Right lobe of liver (tissue), 6 donors: ENCODE measurements at regions of chr1 and their contacts with region 1.

Region 1: GRCh38 chr1:12124693-12125421 is 41.9 kb upstream of the TNFRSF1B start:
- DNase-seq: peak; percentile 78 to 84 (median 83)
- ATAC-seq: peak; percentile 82 to 92 (median 87)
- H3K4me3 ChIP-seq: no peak overlapping the region
- H3K27ac ChIP-seq: no peak overlapping the region
- H3K4me1 ChIP-seq: peaks cover 0 to 9% (median 3%) of the 10 kb centered on the region in 4 donors
- H3K27me3 ChIP-seq: no peaks in the 10 kb centered on the region
- CTCF ChIP-seq: peak; percentile 92 to 97 (median 95)
- POLR2A ChIP-seq: no peak

Region 2: GRCh38 chr1:12052008-12052573 is 72.8 kb before region 1 on chr1:
- intact Hi-C with region 1: no loop called
- DNase-seq: no peak
- ATAC-seq: peak; percentile 22 to 62 (median 36)
- H3K4me3 ChIP-seq: no peak overlapping the region
- H3K27ac ChIP-seq: no peak overlapping the region
- H3K4me1 ChIP-seq: no peaks in the 10 kb centered on the region
- H3K27me3 ChIP-seq: no peaks in the 10 kb centered on the region
- CTCF ChIP-seq: no peak
- POLR2A ChIP-seq: no peak

Region 3: GRCh38 chr1:12208764-12209494 is 84.1 kb after region 1 on chr1:
- intact Hi-C with region 1: loop called (anchors 2 to 5 kb)
- DNase-seq: peak; percentile 79 to 88 (median 84)
- ATAC-seq: peak; percentile 88 to 92 (median 90)
- H3K4me3 ChIP-seq: no peak overlapping the region
- H3K27ac ChIP-seq: no peak overlapping the region
- H3K4me1 ChIP-seq: no peaks in the 10 kb centered on the region
- H3K27me3 ChIP-seq: no peaks in the 10 kb centered on the region
- CTCF ChIP-seq: peak; percentile 91 to 95 (median 94)
- POLR2A ChIP-seq: no peak